Ascending aorta (tissue), 2 donors: ENCODE measurements at regions of chr2 and their contacts with region 1.

Region 1: DNA sequence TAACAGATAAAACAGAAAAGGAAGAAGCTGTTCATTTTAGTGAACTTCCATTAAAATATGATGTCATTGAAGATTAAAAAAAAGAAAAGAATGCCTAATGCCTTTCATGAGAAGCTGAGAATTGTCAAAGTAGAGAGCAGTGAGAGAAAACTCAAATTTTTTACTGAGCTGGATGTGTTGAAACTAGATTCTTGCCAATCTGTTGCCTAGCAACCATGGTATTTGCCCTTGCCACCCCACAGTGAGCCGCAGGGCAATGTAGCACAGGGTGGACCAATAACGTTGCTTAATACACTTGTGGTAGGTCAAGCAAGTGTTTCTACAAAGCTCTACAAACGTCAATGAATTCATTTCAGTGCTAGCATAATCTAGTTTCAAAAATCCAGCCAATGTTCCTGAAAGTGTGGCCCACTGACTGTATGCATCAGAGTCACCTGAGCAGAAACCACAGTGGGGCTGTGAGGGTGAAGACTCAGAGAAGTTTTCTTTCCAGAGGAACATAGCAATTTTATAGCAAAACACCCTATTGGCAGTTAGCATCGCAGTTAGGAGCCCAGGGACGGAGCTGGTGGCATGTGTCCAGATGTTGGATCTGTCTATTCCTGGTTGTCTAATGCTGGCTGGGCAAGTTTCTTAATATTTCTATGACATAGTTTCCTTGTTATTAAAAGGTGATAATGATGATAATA is 132.2 kb downstream of the DOCK10 start:
- DNase-seq: peak; percentile 56 to 90
- H3K4me3 ChIP-seq: peak overlapping the region; percentile 3 to 12
- H3K27ac ChIP-seq: peak overlapping the region; percentile 81 to 85
- H3K4me1 ChIP-seq: peaks cover 13 to 36% of the 10 kb centered on the region in 2 donors
- H3K27me3 ChIP-seq: no peaks in the 10 kb centered on the region
- CTCF ChIP-seq: no peak

Region 2: DNA sequence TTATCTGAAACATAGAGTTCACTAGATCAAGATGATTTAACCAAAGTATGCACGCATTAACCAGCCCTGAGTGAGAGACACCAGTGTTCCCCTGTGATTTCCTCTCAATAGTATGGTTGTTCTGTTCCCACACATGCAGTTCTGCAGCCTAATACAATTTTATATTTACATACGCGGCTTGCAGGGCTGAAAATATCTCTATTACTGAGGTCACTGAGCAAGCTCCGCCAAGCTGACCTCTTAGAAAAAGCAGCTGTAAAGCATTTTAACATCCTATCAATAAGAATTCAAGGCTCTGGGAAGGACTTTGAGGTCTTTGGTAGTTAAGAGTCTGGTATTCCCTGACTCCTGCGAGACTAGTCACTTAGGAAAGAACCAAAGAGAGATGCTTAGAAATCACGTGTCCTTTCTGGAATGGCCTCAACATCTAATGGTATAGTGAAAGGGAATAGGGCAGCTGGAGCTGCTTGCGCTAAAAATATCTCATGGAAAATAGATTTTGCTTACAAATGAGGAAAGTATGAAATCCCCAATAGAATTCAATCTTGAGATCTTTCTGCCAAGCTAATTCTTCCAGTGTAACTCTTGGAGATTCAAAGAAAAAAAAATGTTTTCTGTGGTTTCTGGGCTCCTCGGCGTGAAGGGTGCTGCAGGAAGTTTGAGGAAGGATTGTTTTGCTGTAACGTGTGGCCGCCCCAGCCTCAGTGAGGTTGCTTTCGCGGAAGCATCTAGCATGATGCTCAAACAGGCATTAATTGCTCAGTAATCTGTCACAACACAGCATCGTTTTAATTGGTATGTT is 73.1 kb after region 1 on chr2:
- intact Hi-C with region 1: loop called (anchors 2 kb)
- DNase-seq: peak in 1 of 2 donors; percentile 71
- H3K4me3 ChIP-seq: peak overlapping the region; percentile 43 to 56
- H3K27ac ChIP-seq: peak overlapping the region; percentile 84 to 87
- H3K4me1 ChIP-seq: peaks cover 0 to 5% of the 10 kb centered on the region in 2 donors
- H3K27me3 ChIP-seq: no peaks in the 10 kb centered on the region
- CTCF ChIP-seq: no peak